ENCODE measurements at regions of chr7 and their contacts with region 1.

Region 1: GRCh38 chr7:48035301-48035966 is at the start of gene C7orf57:
- DNase-seq: peak; percentile 97
- H3K4me3 Mint-ChIP-seq: peak within 1 kb of the TSS; percentile 84
- H3K27ac Mint-ChIP-seq: peak within 1 kb of the TSS; percentile 74
- H3K4me1 Mint-ChIP-seq: peaks cover 11% of the 10 kb centered on the region
- H3K27me3 Mint-ChIP-seq: peaks cover 64% of the 10 kb centered on the region
- total RNA-seq, gene C7orf57: 0.14 TPM in 2 replicates

Region 2: DNA sequence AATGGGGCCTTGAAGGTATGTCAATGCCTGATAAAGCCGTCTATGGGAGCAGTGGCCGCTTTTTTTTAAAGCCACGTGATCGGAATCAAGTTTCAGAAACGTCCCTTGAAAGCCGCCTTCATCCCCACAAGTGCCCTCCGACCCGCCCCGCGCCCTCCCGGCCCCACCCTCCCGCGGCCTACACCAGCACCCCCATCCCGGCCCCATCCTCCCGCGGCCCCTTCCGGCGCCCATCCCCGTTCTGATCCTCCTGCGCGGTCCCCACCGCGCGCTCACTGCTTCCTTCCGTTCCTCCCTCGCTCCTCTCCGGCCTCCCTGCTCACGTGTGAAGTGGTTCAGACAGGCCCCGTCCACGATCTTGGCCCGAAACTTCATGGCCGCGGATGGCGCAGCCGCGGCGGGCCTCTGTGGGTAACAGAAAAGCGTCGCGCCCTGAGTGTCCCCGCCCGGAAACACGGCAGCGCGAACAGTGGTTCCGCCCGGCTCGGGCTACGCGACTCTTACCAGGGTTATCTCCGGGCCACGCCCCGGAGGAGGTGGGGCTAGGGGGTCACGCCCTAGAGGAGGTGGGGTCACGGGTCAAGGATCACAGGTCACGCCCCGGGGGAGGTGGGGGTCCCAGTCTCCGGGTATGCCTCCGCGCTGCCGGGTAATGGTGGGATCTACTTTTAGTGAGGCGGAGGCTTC is 56.1 kb before region 1 on chr7 and contains the start of gene HUS1:
- intact Hi-C with region 1: loop called (anchors 1 kb)
- DNase-seq: peak; percentile 98
- H3K4me3 Mint-ChIP-seq: peak within 1 kb of the TSS; percentile 94
- H3K27ac Mint-ChIP-seq: peak within 1 kb of the TSS; percentile 97
- H3K4me1 Mint-ChIP-seq: peaks cover 16% of the 10 kb centered on the region
- H3K27me3 Mint-ChIP-seq: peaks cover 5% of the 10 kb centered on the region
- total RNA-seq, gene HUS1: 32.3 and 35.9 TPM in 2 replicates

Measured in activated CD4-positive, alpha-beta T cell treated with anti-CD3 and anti-CD28 coated beads, Interleukin-2, amount 10 ng/mL, durations not matched to agents 24 days and 14 days (primary cell).